ENCODE measurements at regions of chr14 and their contacts with region 1.

Region 1: GRCh38 chr14:92704036-92704804 is 44.2 kb downstream of the LGMN start:
- DNase-seq: peak; percentile 92
- ATAC-seq: peak; percentile 97
- H3K4me3 ChIP-seq: 0 out of 2 replicates have a peak overlapping the region, but pooled peaks have one; percentile 2
- H3K27ac ChIP-seq: peak overlapping the region; percentile 29; the same call in 1 of the 2 replicates
- H3K4me1 ChIP-seq: peaks cover 26% of the 10 kb centered on the region
- H3K27me3 ChIP-seq: no peaks in the 10 kb centered on the region
- CTCF ChIP-seq: no peak
- EP300 ChIP-seq: peak; percentile 50 to 70; a peak in 3 of 4 replicates
- POLR2A ChIP-seq: no peak
- RAD21 ChIP-seq: no peak

Region 2: DNA sequence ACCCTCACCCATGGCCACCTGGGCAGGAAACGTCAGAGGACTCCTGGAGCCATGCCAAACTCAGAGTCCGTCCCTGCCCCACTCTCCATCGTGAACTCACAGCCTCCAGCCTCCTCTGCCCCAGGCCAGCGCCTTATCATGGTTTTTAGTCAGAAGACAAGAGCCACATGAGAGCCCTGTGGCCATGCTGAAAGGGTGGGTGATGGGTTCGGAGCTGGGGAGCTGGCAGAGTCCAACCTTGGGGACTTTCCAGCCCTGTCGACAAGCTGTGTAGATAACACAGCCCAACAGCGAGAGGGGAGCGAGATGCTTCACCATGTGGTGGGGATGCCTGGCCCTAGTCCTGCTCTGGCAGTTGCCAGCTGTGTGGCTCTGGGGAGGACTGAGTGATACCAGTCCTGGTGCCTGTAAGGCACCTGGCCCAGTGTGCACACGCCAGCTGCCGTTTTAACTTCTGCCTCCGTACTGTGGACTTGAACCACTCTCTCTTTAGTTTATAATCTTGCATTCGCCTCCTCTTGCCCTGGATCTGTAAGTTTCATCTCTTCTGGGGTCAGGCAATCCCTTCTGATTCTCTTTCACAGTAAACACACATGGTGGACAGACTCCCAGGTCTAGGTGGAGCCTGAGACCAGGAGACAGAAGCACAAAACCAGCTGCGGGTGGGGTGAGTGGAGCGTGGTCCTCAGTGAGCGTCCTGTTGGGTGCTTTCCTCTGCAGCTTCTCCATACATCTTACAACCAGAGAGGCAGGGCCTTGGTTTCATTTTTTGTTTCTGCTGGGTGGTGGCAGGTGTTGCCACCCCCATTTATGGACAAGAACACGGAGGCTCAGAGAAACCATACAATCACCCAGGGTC is 135.4 kb before region 1 on chr14:
- CTCF ChIA-PET with region 1: no interaction called
- POLR2A ChIA-PET with region 1: no interaction called
- RAD21 ChIA-PET with region 1: no interaction called
- SMC1A ChIA-PET with region 1: no interaction called
- in situ Hi-C with region 1: no loop called
- intact Hi-C with region 1: no loop called
- DNase-seq: peak; percentile 76
- ATAC-seq: peak; percentile 93
- H3K4me3 ChIP-seq: peak overlapping the region; percentile 11; the same call in 1 of the 2 replicates
- H3K27ac ChIP-seq: peak overlapping the region; percentile 88
- H3K4me1 ChIP-seq: peaks cover 31% of the 10 kb centered on the region
- H3K27me3 ChIP-seq: no peaks in the 10 kb centered on the region
- CTCF ChIP-seq: 0 out of 6 replicates have a peak, but pooled peaks of 1 of the 3 experiments have one; percentile 1
- EP300 ChIP-seq: no peak; a peak in 1 of 4 replicates
- POLR2A ChIP-seq: peak; percentile 42; the same call in 1 of the 2 replicates
- RAD21 ChIP-seq: 0 out of 2 replicates have a peak, but pooled peaks have one; percentile 10

Region 3: GRCh38 chr14:92774572-92774971 is 70.4 kb after region 1 on chr14:
- CTCF ChIA-PET with region 1: interaction called, 3 read pairs
- POLR2A ChIA-PET with region 1: interaction called, 4 read pairs
- RAD21 ChIA-PET with region 1: no interaction called
- SMC1A ChIA-PET with region 1: interaction called, 151 read pairs
- in situ Hi-C with region 1: no loop called
- intact Hi-C with region 1: no loop called
- DNase-seq: no peak
- ATAC-seq: no peak
- H3K4me3 ChIP-seq: no peak overlapping the region
- H3K27ac ChIP-seq: no peak overlapping the region
- H3K4me1 ChIP-seq: peaks cover 30% of the 10 kb centered on the region
- H3K27me3 ChIP-seq: peaks cover 0 to 2% of the 10 kb centered on the region in 2 experiments; a peak in 2 of 4 replicates
- CTCF ChIP-seq: no peak
- EP300 ChIP-seq: no peak
- POLR2A ChIP-seq: no peak
- RAD21 ChIP-seq: no peak

Region 4: DNA sequence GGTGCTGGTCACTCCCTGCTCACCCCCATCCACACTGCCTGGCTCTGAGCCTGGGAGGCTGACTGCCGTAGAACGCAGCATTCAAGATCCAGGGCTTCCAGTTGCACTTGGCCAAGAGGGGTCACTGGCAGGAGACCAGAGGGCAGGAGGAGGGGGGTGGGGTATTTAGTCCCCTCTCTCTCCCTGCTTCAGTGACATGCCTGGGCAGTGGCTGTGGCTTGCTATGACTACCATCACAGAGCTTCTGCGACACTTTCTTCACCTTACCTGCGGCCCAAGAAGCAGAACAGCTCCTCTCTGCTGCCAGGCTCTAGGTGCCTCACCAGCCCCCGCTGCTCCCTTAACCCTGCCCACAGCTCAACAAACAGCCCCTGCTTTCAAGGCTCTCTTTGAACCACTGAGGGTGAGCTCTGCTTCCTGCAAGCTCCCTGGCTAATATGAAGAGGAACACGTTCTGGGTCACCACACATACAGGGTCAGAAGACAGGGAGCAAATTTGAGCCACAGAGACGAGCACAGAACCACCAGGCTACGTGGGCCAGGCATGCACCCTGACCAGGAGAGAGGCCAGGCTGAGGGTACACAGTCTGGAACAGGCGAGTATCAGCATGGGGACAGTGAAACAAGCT is 355.8 kb after region 1 on chr14:
- CTCF ChIA-PET with region 1: no interaction called
- POLR2A ChIA-PET with region 1: interaction called, 10 read pairs
- RAD21 ChIA-PET with region 1: no interaction called
- SMC1A ChIA-PET with region 1: no interaction called
- in situ Hi-C with region 1: no loop called
- intact Hi-C with region 1: no loop called
- DNase-seq: no peak
- ATAC-seq: peak; percentile 76
- H3K4me3 ChIP-seq: no peak overlapping the region
- H3K27ac ChIP-seq: peak overlapping the region; percentile 78
- H3K4me1 ChIP-seq: peaks cover 46% of the 10 kb centered on the region
- H3K27me3 ChIP-seq: no peaks in the 10 kb centered on the region
- CTCF ChIP-seq: no peak
- EP300 ChIP-seq: no peak
- POLR2A ChIP-seq: no peak; the same call in 1 of the 2 replicates
- RAD21 ChIP-seq: no peak